ENCODE measurements at regions of chr2 and their contacts with region 1.

Region 1: DNA sequence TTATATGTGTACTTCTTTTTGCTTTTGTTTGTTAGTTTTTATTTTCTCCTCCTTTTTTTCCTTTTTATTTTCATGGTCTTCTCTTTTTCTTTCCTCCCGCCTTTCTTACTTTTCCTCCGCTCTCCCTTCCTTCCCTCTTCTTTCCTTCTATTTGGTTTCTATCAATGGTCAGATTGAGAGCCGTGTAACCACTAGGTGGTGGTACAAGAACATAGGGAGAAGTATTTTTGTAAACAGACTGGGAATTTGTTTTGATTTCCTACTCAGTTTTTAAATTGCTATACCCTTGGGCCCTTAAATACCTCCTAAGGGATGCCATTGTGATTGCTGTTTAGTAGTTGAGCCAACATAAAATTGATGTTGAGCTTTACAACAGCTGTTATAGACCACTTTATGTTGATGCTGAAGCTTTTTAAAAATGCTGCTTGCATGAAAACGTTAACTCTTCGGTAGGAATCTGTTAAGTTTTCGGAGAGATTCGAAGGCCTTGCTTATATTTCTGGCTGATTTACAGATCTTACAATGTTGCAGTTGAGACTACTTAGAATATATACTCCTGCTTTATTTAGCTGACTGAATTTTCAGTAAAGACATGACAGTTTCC is 124.2 kb downstream of the UBE2E3 start:
- DNase-seq: no peak
- ATAC-seq: no peak

Region 2: DNA sequence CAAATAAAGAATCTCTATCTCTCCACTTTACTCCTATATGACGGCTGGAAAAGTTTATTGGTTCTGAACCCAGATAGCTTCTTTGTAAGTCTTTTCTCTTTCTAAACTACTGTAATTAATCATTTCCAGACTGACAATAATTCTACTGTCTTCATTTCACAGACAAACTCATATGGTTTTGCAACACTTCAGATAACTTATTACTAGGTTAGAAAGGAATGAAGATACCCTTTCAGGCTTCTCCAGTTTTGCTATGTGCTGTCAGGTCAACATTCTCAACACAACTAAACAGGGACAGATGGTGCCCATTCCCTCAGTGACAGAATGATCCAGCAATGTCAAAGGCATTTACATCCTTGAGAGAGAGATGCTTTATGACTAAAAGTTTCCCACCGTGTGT is 154.1 kb after region 1 on chr2:
- intact Hi-C with region 1: no loop called
- DNase-seq: no peak
- ATAC-seq: no peak

Region 3: GRCh38 chr2:181457121-181457740 is 352.6 kb after region 1 on chr2 and contains the start of gene ITGA4:
- intact Hi-C with region 1: loop called (anchors 5 kb)
- DNase-seq: peak; percentile 84
- ATAC-seq: peak; percentile 97
- total RNA-seq, gene ITGA4: 1.5 TPM

Region 4: DNA sequence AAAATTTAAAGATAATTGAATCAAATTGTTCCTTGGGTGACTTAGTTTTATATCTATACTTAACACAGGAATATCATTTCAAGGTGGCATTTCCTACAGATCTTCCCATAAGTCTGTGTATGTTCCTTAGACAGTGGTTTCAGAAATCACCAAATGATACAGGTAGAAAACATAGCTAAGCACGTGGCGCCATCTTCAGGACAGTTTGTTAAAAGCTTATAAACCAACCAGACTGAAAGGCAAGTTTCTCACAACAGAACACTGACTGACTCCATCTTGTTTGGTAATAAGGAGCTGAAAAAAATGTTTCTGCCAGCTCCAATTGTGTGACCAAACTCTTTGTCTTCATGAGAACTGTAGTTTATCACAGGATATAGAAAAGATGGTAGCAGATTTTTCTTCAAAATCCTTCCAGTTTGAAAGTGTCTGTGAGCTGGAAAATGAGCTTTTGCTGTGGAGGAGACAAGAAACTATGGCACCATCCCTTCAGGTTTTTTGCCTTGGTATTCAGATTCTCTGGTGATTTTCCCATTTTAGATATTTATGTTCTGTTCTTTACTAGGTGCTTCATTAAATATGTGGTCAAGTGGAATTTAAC is 610.5 kb after region 1 on chr2:
- intact Hi-C with region 1: loop called (anchors 10 kb)
- DNase-seq: peak; percentile 50
- ATAC-seq: peak; percentile 57

Measured in left ventricle myocardium superior (tissue), 1 donor.